SK-N-SH (cell line): ENCODE measurements at regions of chr20 and their contacts with region 1.

Region 1: DNA sequence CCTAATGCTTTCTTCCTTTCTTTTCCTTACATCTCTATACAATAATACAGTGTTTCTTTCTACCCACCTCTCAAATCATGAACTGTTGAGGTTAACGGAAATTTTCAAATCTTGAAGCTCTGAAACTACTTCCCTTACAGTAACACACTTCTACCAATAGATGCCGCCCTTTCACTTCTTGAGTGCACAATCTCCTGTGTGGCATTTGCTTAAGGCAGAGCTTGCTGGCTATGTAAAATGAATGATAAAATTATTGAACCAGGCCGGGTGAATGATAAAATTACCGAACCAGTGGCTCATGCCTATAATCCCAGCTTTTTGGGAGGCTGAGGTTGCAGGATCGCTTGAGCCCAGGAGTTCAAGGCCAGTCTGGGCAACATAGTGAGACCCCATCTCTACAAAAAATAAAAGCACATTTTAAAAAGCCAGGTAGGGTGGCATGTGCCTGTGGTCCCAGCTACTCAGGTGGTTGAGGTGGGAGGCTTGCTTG is 56.8 kb downstream of the KCNS1 start:
- DNase-seq: peak; percentile 36
- H3K4me3 ChIP-seq: no peak overlapping the region; a peak in 1 of 4 replicates
- H3K27ac ChIP-seq: peak overlapping the region in 1 of 2 experiments; percentile 63; a peak in 2 of 4 replicates
- H3K4me1 ChIP-seq: peaks cover 0 to 29% of the 10 kb centered on the region in 2 experiments; a peak in 2 of 4 replicates
- H3K27me3 ChIP-seq: no peaks in the 10 kb centered on the region
- CTCF ChIP-seq: peak; percentile 96
- EP300 ChIP-seq: no peak
- RAD21 ChIP-seq: peak; percentile 91

Region 2: DNA sequence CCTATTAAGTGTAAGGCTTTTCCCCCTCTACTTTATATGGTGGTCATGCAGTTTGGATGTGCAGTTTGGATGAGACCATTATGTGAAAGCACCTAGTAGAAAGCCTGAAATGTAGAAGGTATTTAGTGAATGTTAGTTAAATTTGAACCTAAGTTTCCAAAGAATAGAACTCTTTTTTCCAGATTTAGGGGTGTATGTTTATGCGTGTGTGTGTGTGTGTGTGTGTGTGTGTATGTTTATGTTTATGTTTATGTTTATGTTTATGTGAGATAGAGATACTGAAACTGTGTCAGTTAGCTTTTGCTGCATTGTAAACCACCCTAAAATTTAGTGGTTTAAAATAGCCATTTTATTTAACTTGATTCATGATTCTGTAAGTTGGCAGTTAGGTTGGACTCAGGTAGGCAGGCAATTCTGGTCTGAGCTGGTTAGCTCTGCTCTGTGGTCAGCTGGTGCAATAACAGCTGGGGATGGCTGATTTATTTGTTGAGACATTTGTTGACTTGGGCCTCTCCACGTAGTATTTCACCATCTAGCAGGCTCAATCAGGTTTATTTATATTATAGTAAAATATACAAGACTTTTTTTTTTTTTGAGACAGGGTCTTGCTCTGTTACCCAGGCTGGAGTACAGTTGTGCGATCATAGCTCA is 23.8 kb before region 1 on chr20:
- CTCF ChIA-PET with region 1: interaction called, 11 read pairs
- POLR2A ChIA-PET with region 1: no interaction called
- DNase-seq: no peak
- H3K4me3 ChIP-seq: no peak overlapping the region
- H3K27ac ChIP-seq: peak overlapping the region in 1 of 2 experiments; percentile 58; a peak in 3 of 4 replicates
- H3K4me1 ChIP-seq: peaks cover 23% of the 10 kb centered on the region in 2 experiments
- H3K27me3 ChIP-seq: no peaks in the 10 kb centered on the region
- CTCF ChIP-seq: no peak
- EP300 ChIP-seq: no peak
- RAD21 ChIP-seq: no peak

Region 3: DNA sequence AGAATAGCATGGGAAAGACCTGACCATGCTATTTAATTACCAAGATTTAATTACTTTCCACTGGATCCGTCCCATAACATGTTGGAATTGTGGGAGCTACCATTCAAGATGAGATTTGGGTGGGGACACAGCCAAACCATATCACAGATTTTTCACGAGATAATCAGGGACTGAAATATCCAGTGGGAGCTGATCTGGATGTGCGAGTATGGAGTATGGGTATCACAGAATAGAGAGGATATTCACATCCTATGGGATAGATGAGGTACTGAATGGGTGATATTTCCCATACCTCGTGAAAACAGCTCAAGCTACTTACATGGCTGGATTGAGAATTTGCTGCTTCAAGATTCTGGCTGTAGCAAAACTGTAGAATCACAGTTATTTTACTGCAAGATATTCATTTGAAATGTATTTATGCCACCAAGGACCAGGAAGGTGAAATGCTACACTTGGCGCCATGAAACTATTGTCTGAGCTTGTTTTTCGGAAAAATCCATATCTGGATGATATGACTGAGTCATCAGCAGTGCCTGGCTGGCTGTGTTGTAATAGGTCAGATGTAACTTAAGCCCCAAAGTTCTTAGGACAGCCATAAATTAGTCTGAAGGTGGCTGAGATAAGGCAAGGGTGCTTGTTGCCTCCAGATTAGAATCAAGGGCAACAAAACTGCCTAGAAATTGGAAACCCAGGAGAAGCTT is 27.0 kb after region 1 on chr20:
- CTCF ChIA-PET with region 1: interaction called, 15 read pairs
- POLR2A ChIA-PET with region 1: no interaction called
- DNase-seq: no peak
- H3K4me3 ChIP-seq: no peak overlapping the region
- H3K27ac ChIP-seq: no peak overlapping the region
- H3K4me1 ChIP-seq: no peaks in the 10 kb centered on the region; a peak in 2 of 4 replicates
- H3K27me3 ChIP-seq: no peaks in the 10 kb centered on the region
- CTCF ChIP-seq: no peak
- EP300 ChIP-seq: peak in 1 of 2 experiments; percentile 75; a peak in 1 of 4 replicates
- RAD21 ChIP-seq: no peak

Region 4: DNA sequence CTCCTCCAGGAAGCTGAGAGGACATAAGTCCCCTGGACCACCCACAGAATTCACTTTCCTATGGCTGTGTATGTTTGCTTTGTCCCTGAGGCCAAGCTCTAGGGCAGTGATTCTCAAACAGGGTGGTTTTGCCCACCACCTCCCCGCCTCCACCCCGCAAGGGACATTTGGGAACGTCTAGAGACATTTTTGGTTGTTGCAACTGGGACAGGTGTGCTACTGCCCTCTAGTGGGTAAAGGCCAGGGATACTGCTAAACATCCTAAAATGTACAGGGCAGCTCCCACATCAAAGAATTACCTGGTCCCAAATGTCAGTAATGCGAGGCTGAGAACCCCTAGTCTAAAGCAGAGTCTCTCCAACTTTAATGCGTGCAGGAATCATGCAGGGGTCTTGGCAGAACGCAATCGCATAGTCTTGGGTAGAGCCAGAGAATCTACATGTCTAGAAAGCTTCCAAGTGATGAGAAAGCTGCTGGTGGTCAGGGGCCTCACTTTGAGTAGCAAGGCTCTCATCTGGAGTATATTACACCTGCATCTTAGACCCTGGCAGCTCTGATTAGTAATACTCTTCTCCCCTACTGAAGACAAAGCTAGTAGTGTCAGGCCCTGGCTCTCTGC is 51.7 kb after region 1 on chr20:
- CTCF ChIA-PET with region 1: interaction called, 108 read pairs
- POLR2A ChIA-PET with region 1: interaction called, 3 read pairs
- DNase-seq: peak; percentile 66
- H3K4me3 ChIP-seq: no peak overlapping the region
- H3K27ac ChIP-seq: no peak overlapping the region
- H3K4me1 ChIP-seq: peaks cover 0 to 4% of the 10 kb centered on the region in 2 experiments; a peak in 1 of 4 replicates
- H3K27me3 ChIP-seq: no peaks in the 10 kb centered on the region
- CTCF ChIP-seq: peak; percentile 77
- EP300 ChIP-seq: no peak; a peak in 1 of 4 replicates
- RAD21 ChIP-seq: peak; percentile 78

Region 5: GRCh38 chr20:45111799-45112471 is 67.8 kb after region 1 on chr20:
- CTCF ChIA-PET with region 1: interaction called, 53 read pairs
- POLR2A ChIA-PET with region 1: no interaction called
- DNase-seq: peak; percentile 59
- H3K4me3 ChIP-seq: no peak overlapping the region; a peak in 1 of 4 replicates
- H3K27ac ChIP-seq: no peak overlapping the region
- H3K4me1 ChIP-seq: no peaks in the 10 kb centered on the region
- H3K27me3 ChIP-seq: no peaks in the 10 kb centered on the region
- CTCF ChIP-seq: peak; percentile 71
- EP300 ChIP-seq: no peak
- RAD21 ChIP-seq: peak; percentile 33; the same call in 1 of the 2 replicates